ENCODE measurements at regions of chr13 and their contacts with region 1.

Region 1: GRCh38 chr13:94435604-94436226 is 43.8 kb downstream of the DCT start:
- DNase-seq: peak; percentile 25 to 40 (median 34)
- ATAC-seq: peak; percentile 65
- H3K4me3 ChIP-seq: no peak overlapping the region
- H3K27ac ChIP-seq: no peak overlapping the region
- H3K4me1 ChIP-seq: peaks cover 0 to 6% of the 10 kb centered on the region in 2 experiments; a peak in 4 of 5 replicates
- H3K27me3 ChIP-seq: no peaks in the 10 kb centered on the region; a peak in 1 of 5 replicates
- CTCF ChIP-seq: peak; percentile 23 to 60 (median 41); a peak in 4 of 6 replicates
- EP300 ChIP-seq: no peak
- POLR2A ChIP-seq: no peak
- RAD21 ChIP-seq: peak; percentile 67 to 75

Region 2: GRCh38 chr13:93039131-93039530 is 1396.6 kb before region 1 on chr13:
- CTCF ChIA-PET with region 1: no interaction called
- POLR2A ChIA-PET with region 1: no interaction called
- in situ Hi-C with region 1: no loop called
- intact Hi-C with region 1: no loop called
- DNase-seq: no peak
- ATAC-seq: no peak
- H3K4me3 ChIP-seq: no peak overlapping the region
- H3K27ac ChIP-seq: no peak overlapping the region
- H3K4me1 ChIP-seq: no peaks in the 10 kb centered on the region
- H3K27me3 ChIP-seq: no peaks in the 10 kb centered on the region
- CTCF ChIP-seq: no peak
- EP300 ChIP-seq: no peak
- POLR2A ChIP-seq: no peak
- RAD21 ChIP-seq: no peak

Region 3: DNA sequence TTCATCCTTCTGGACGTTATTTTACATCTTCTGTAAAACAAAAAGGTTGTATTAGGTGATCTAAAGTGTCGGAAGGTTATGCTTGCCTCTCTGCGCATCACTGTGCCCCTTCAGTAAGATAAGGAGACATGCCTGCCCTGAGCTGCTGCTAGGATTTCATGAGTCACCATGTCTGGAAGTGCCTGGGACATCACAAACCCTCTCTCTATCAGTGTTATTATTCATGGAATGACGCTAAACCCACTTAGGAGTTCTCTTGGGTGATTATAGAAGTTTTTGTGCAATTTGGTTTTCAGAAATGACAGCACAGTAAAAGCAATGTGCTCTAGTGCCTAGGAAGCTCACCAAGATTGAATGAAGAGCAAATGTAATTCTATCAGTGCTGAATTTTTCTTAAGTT is 573.9 kb before region 1 on chr13:
- CTCF ChIA-PET with region 1: no interaction called
- POLR2A ChIA-PET with region 1: no interaction called
- in situ Hi-C with region 1: no loop called
- intact Hi-C with region 1: no loop called
- DNase-seq: no peak
- ATAC-seq: no peak
- H3K4me3 ChIP-seq: no peak overlapping the region
- H3K27ac ChIP-seq: no peak overlapping the region
- H3K4me1 ChIP-seq: no peaks in the 10 kb centered on the region
- H3K27me3 ChIP-seq: no peaks in the 10 kb centered on the region
- CTCF ChIP-seq: no peak
- EP300 ChIP-seq: no peak
- POLR2A ChIP-seq: no peak
- RAD21 ChIP-seq: no peak

Region 4: GRCh38 chr13:94612050-94612449 is 176.3 kb after region 1 on chr13:
- CTCF ChIA-PET with region 1: interaction called, 7 read pairs
- POLR2A ChIA-PET with region 1: interaction called, 4 read pairs
- in situ Hi-C with region 1: loop called (anchors 5 kb)
- intact Hi-C with region 1: loop called (anchors 1 kb)
- DNase-seq: no peak
- ATAC-seq: no peak
- H3K4me3 ChIP-seq: no peak overlapping the region
- H3K27ac ChIP-seq: no peak overlapping the region
- H3K4me1 ChIP-seq: no peaks in the 10 kb centered on the region; a peak in 1 of 5 replicates
- H3K27me3 ChIP-seq: no peaks in the 10 kb centered on the region
- CTCF ChIP-seq: no peak
- EP300 ChIP-seq: no peak
- POLR2A ChIP-seq: no peak
- RAD21 ChIP-seq: no peak

Region 5: DNA sequence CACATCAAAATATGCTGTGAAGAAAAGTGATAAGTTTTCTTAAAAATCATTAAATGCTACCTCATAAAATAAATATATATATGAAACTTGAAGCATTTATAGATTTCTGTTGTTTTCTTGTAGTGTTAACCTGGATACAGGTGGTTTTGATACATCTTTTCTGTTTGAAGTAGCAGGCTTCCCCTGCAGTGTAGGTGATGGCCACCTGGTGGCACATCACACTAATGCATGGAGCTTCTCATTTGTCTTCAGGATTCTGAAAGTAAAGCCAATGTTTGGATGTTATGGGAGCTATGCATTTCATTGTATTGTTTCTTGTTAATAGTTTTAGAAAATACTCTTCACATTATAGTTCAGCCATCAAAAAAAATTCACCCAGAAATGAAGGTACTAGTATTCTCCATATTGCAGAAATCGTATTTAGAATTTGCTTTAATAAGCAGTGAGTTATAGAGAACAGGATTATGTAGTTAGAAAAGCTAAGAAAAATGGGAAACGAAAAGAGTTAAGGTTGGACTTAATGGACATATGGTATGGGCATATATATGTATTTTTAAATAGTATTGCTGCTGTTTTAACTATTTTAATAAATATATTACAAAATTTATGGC is 184.7 kb after region 1 on chr13:
- CTCF ChIA-PET with region 1: interaction called, 7 read pairs
- POLR2A ChIA-PET with region 1: interaction called, 4 read pairs
- in situ Hi-C with region 1: no loop called
- intact Hi-C with region 1: loop called (anchors 1 kb)
- DNase-seq: peak; percentile 30 to 68 (median 34)
- ATAC-seq: peak; percentile 87
- H3K4me3 ChIP-seq: no peak overlapping the region
- H3K27ac ChIP-seq: no peak overlapping the region
- H3K4me1 ChIP-seq: no peaks in the 10 kb centered on the region
- H3K27me3 ChIP-seq: no peaks in the 10 kb centered on the region
- CTCF ChIP-seq: peak; percentile 60 to 73 (median 64)
- EP300 ChIP-seq: no peak
- POLR2A ChIP-seq: no peak
- RAD21 ChIP-seq: peak; percentile 56 to 79

Region 6: DNA sequence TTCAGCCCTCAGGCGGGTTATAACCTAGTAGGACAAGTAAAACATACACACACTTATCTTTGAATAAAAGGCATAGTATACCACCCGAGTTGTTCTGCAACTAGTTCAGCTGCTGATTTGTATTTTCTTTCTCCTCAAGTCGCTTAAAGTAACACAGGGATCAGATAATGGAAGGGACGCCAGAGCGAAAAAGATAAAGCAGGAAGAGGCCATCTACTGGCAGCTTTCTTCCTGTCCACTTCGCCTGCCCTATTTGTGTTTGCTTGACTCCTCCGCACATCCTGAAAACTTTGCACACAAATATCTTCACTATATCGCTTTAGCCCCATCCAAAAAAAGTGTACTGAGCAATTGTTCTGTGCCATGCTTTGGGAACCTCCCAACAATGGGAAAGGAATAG is 514.6 kb after region 1 on chr13:
- CTCF ChIA-PET with region 1: no interaction called
- POLR2A ChIA-PET with region 1: no interaction called
- in situ Hi-C with region 1: no loop called
- intact Hi-C with region 1: loop called (anchors 10 kb)
- DNase-seq: peak in 2 of 4 experiments; percentile 17 to 28
- ATAC-seq: peak; percentile 81
- H3K4me3 ChIP-seq: no peak overlapping the region
- H3K27ac ChIP-seq: no peak overlapping the region
- H3K4me1 ChIP-seq: no peaks in the 10 kb centered on the region; a peak in 1 of 5 replicates
- H3K27me3 ChIP-seq: peaks cover 0 to 12% of the 10 kb centered on the region in 2 experiments; a peak in 2 of 5 replicates
- CTCF ChIP-seq: peak in 2 of 3 experiments; percentile 43 to 50; a peak in 3 of 6 replicates
- EP300 ChIP-seq: no peak
- POLR2A ChIP-seq: no peak
- RAD21 ChIP-seq: peak; percentile 53

Measured in K562 (cell line).